H1 (cell line): ENCODE measurements at regions of chr2 and their contacts with region 1.

Region 1: GRCh38 chr2:98909317-98910211 is 26.5 kb downstream of the CRACDL start:
- DNase-seq: peak; percentile 38 to 69
- H3K4me3 ChIP-seq: no peak overlapping the region
- H3K27ac ChIP-seq: no peak overlapping the region
- H3K4me1 ChIP-seq: peaks cover 0 to 21% (median 7%) of the 10 kb centered on the region in 4 experiments
- H3K27me3 ChIP-seq: no peaks in the 10 kb centered on the region; a peak in 1 of 7 replicates
- CTCF ChIP-seq: no peak
- EP300 ChIP-seq: no peak
- POLR2A ChIP-seq: no peak
- RAD21 ChIP-seq: no peak

Region 2: DNA sequence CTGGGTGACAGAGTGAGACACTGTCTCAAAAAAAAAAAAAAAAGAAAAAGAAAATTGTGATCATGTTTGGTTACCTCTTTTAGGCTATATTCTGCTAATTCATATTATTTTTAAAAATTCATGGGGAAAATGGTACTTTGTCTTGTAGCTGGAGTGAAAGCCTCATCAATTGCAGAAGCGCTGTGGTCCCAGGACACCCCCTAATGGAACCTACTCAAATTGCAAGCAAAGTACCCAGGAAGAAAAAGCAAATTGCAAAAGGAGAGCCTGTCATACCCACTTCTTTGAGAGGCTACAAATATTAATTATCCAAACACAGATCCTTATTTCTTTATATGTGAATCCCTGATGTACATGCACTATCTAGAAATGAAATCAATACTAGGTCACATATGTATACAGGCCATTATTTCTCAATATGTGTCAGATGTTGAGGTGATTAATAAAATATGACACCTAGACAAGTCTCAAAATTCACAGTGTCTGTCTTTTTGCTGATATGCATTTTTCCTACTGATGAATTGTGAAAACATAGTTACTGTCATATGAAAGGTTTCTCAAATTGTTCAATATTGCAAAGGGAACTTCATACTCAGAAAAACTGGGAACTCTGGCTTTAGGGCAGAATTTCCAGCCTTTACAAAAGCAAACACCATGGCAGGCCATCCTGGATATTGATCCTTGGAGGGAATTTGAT is 13.8 kb after region 1 on chr2:
- CTCF ChIA-PET with region 1: interaction called, 12 read pairs
- POLR2A ChIA-PET with region 1: interaction called, 3 read pairs
- DNase-seq: no peak
- H3K4me3 ChIP-seq: no peak overlapping the region
- H3K27ac ChIP-seq: no peak overlapping the region
- H3K4me1 ChIP-seq: peaks cover 0 to 4% (median 0%) of the 10 kb centered on the region in 4 experiments; a peak in 1 of 7 replicates
- H3K27me3 ChIP-seq: no peaks in the 10 kb centered on the region
- CTCF ChIP-seq: peak in 2 of 3 experiments; percentile 38 to 42; a peak in 3 of 4 replicates
- EP300 ChIP-seq: no peak
- POLR2A ChIP-seq: no peak
- RAD21 ChIP-seq: peak; percentile 50 to 60